ENCODE measurements at regions of chr14 and their contacts with region 1.

Region 1: GRCh38 chr14:22570132-22570949 is 18.7 kb downstream of the DAD1 start:
- DNase-seq: peak; percentile 63 to 98 (median 80)
- ATAC-seq: peak; percentile 85
- H3K4me3 ChIP-seq: peak overlapping the region; percentile 45
- H3K4me3 Mint-ChIP-seq: peak overlapping the region; percentile 73
- H3K27ac ChIP-seq: peak overlapping the region; percentile 79 to 92
- H3K27ac Mint-ChIP-seq: peak overlapping the region; percentile 97
- H3K4me1 ChIP-seq: peaks cover 43% of the 10 kb centered on the region
- H3K4me1 Mint-ChIP-seq: peaks cover 71% of the 10 kb centered on the region
- H3K27me3 ChIP-seq: no peaks in the 10 kb centered on the region
- H3K27me3 Mint-ChIP-seq: no peaks in the 10 kb centered on the region
- CTCF ChIP-seq: peak; percentile 92

Region 2: DNA sequence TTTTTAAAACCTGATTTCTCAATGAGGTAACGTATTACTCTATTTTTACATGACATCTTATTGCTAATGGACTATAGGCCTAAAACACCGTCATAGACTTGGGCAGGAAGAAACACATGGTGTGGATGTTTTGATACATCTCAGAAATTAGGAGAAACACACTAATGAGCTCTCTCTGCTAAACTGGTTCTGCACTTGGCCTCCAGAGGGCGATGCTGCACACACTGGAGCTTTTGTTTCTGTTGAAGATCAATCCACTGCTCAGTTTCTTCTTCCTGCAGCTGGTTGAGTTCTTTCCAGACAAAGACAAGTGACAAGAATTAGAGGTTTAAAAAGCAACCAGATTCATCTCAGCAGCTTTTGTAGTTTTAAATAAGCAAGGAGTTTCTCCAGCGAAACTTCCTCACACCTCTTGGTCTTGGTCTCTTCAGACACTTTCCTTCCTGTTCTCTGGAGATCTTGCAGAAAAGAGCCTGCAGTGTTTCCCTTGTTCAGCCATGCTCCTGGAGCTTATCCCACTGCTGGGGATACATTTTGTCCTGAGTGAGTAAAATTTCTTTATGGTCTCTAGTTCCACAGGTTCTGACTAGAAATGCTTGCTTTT is 718.2 kb before region 1 on chr14:
- CTCF ChIA-PET with region 1: interaction called, 12 read pairs
- POLR2A ChIA-PET with region 1: interaction called, 8 read pairs
- intact Hi-C with region 1: no loop called
- DNase-seq: peak; percentile 63 to 86 (median 70)
- ATAC-seq: peak; percentile 82
- H3K4me3 ChIP-seq: peak overlapping the region; percentile 51
- H3K4me3 Mint-ChIP-seq: peak overlapping the region; percentile 88
- H3K27ac ChIP-seq: peak overlapping the region in 1 of 2 donors; percentile 37
- H3K27ac Mint-ChIP-seq: peak overlapping the region; percentile 69
- H3K4me1 ChIP-seq: no peaks in the 10 kb centered on the region
- H3K4me1 Mint-ChIP-seq: peaks cover 18% of the 10 kb centered on the region
- H3K27me3 ChIP-seq: no peaks in the 10 kb centered on the region
- H3K27me3 Mint-ChIP-seq: peaks cover 17% of the 10 kb centered on the region
- CTCF ChIP-seq: peak; percentile 80

Region 3: GRCh38 chr14:22221508-22221907 is 348.8 kb before region 1 on chr14:
- CTCF ChIA-PET with region 1: interaction called, 10 read pairs
- POLR2A ChIA-PET with region 1: interaction called, 5 read pairs
- intact Hi-C with region 1: no loop called
- DNase-seq: peak in 3 of 14 experiments; percentile 39 to 51 (median 39)
- ATAC-seq: peak; percentile 41
- H3K4me3 ChIP-seq: no peak overlapping the region
- H3K4me3 Mint-ChIP-seq: peak overlapping the region; percentile 73
- H3K27ac ChIP-seq: no peak overlapping the region
- H3K27ac Mint-ChIP-seq: peak overlapping the region; percentile 67
- H3K4me1 ChIP-seq: no peaks in the 10 kb centered on the region
- H3K4me1 Mint-ChIP-seq: peaks cover 17% of the 10 kb centered on the region
- H3K27me3 ChIP-seq: no peaks in the 10 kb centered on the region
- H3K27me3 Mint-ChIP-seq: no peaks in the 10 kb centered on the region
- CTCF ChIP-seq: peak; percentile 12

Region 4: DNA sequence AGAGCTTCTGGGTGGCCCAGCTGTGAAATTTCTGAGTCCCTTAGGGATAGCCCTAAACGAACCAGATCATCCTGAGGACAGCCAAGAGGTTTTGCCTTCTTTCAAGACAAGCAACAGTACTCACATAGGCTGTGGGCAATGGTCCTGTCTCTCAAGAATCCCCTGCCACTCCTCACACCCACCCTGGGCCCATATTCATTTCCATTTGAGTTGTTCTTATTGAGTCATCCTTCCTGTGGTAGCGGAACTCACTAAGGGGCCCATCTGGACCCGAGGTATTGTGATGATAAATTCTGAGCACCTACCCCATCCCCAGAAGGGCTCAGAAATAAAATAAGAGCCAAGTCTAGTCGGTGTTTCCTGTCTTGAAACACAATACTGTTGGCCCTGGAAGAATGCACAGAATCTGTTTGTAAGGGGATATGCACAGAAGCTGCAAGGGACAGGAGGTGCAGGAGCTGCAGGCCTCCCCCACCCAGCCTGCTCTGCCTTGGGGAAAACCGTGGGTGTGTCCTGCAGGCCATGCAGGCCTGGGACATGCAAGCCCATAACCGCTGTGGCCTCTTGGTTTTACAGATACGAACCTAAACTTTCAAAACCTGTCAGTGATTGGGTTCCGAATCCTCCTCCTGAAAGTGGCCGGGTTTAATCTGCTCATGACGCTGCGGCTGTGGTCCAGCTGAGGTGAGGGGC is 20.2 kb before region 1 on chr14:
- CTCF ChIA-PET with region 1: interaction called, 211 read pairs
- POLR2A ChIA-PET with region 1: interaction called, 179 read pairs
- intact Hi-C with region 1: no loop called
- DNase-seq: peak in 12 of 14 experiments; percentile 44 to 84 (median 65)
- ATAC-seq: peak; percentile 62
- H3K4me3 ChIP-seq: peak overlapping the region; percentile 10
- H3K4me3 Mint-ChIP-seq: peak overlapping the region; percentile 85
- H3K27ac ChIP-seq: peak overlapping the region; percentile 99
- H3K27ac Mint-ChIP-seq: peak overlapping the region; percentile 93
- H3K4me1 ChIP-seq: peaks cover 100% of the 10 kb centered on the region
- H3K4me1 Mint-ChIP-seq: peaks cover 97% of the 10 kb centered on the region
- H3K27me3 ChIP-seq: no peaks in the 10 kb centered on the region
- H3K27me3 Mint-ChIP-seq: no peaks in the 10 kb centered on the region
- CTCF ChIP-seq: no peak

Region 5: DNA sequence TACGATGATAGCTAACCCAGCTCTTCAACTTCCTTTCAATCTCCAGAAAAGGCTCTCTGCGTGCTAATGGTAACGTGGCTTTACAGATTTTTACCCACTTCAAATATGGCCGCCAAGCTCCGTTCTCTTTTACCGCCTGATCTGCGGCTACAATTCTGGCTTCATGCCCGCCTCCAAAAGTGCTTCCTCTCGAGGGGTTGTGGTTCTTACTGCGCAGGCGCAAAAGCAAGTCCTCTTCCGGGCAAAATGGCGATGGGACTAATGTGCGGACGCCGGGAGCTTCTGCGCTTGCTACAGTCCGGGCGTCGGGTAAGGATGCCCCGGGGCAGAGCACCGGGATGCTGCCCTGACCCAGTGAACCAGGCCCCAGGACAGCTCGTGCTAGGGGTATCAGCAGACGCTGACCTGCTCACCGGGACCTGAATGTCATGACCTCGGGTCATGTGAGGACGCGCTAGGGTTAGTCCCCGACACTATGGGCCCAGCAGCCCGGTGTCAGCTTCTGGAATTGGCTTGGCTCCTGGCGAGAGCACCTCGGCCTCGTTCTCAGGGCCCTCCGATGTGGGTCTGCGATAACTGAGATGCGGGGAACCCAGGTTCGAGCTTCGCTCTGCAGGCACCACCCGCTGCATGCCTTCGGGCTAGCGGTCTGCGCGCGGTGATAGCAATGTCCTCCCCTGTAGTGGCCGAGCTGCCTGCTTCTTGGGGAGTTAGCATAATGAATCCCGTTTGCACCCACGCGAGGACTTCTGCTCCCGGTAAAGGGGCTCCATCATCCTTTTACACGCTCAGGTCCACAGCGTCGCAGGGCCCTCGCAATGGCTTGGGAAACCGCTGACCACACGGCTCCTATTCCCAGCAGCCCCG is 196.3 kb after region 1 on chr14 and contains the start of gene OXA1L:
- CTCF ChIA-PET with region 1: interaction called, 24 read pairs
- POLR2A ChIA-PET with region 1: interaction called, 20 read pairs
- intact Hi-C with region 1: no loop called
- DNase-seq: peak; percentile 86 to 99 (median 96)
- ATAC-seq: peak; percentile 94
- H3K4me3 ChIP-seq: peak within 1 kb of the TSS; percentile 87
- H3K4me3 Mint-ChIP-seq: peak within 1 kb of the TSS; percentile 85
- H3K27ac ChIP-seq: peak within 1 kb of the TSS; percentile 80
- H3K27ac Mint-ChIP-seq: peak within 1 kb of the TSS; percentile 88
- H3K4me1 ChIP-seq: peaks cover 23% of the 10 kb centered on the region
- H3K4me1 Mint-ChIP-seq: peaks cover 33% of the 10 kb centered on the region
- H3K27me3 ChIP-seq: no peaks in the 10 kb centered on the region
- H3K27me3 Mint-ChIP-seq: no peaks in the 10 kb centered on the region
- CTCF ChIP-seq: no peak
- total RNA-seq, gene OXA1L: 176 to 177 TPM

Region 6: DNA sequence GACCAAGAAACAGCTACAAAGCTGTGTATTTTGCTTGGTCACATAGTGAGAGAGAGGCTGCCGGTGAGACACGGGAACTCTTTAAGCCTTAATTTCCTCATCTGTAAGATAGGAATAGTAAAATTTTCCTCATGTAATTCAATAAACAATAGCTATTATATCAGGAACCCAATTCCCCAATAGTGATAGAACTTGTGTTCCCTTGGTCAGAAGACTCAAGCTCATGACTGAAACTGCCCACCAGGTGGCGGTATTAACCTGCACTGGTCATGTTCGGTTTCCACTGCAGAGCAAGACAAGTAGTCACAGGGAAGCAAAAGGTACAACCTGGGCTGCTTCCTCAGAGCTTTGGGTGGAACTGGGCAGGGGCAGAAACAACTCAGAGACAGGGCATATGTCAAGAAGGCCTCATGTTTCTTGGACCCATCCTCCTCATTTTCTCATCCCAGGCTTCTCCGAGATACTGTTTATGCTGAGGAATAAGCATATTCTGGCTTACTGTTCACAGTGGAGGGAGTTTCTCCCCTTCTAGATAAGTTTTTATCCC is 416.2 kb after region 1 on chr14:
- CTCF ChIA-PET with region 1: interaction called, 11 read pairs
- POLR2A ChIA-PET with region 1: interaction called, 10 read pairs
- intact Hi-C with region 1: loop called (anchors 1 kb)
- DNase-seq: peak; percentile 81 to 96 (median 88)
- ATAC-seq: peak; percentile 67
- H3K4me3 ChIP-seq: no peak overlapping the region
- H3K4me3 Mint-ChIP-seq: peak overlapping the region; percentile 3
- H3K27ac ChIP-seq: no peak overlapping the region
- H3K27ac Mint-ChIP-seq: no peak overlapping the region
- H3K4me1 ChIP-seq: peaks cover 17% of the 10 kb centered on the region
- H3K4me1 Mint-ChIP-seq: peaks cover 3% of the 10 kb centered on the region
- H3K27me3 ChIP-seq: peaks cover 0 to 5% of the 10 kb centered on the region in 2 experiments
- H3K27me3 Mint-ChIP-seq: no peaks in the 10 kb centered on the region
- CTCF ChIP-seq: peak; percentile 95

Measured in CD4-positive, alpha-beta T cell (primary cell).